ENCODE measurements at regions of chr18 and their contacts with region 1.

Region 1: GRCh38 chr18:24878289-24878688 is 417.9 kb downstream of the HRH4 start:
- DNase-seq: no peak

Region 2: DNA sequence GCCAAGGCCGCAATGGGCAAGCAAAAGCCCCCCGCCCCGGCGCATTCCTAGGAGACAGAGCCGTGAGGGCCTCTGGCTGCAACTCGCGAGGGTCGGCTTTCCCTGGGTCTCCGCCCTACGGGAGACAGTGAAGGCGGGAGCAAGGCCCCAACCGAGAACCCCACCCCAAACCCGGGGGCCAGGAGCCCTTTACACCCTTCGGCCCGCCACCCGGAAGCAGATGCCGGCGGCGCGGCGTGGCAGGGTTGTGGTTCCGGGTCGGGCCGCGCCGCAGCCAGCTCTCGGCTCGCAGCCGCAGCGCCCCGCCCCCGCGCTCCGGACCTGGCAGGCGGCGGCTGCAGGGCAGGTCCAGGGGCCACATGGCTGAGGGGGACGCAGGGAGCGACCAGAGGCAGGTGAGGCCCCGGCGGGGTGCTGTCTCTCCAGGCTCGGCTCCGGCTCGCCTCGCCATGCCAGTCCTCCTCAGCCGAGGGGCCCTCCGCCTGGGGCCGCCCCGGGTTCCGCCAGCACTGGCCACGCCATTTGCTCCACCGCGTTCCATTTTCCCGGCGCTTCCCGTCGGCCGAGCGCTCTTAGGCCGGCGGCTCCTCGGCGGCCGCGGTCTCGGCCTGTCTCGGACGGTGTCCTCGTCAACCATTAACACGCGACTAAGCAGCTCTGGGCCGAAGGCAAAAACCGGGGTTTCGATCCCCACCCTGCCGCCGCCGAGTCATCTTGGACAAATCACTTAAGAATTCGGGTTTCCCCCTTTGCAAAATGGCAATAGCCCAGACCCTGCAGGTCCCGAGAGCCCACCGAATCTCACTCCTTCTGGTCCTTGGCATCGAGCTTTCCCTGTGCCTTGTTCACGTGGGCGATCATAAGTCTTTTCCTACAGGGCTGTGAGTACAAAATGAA is 451.6 kb before region 1 on chr18 and contains the start of gene IMPACT:
- intact Hi-C with region 1: no loop called
- DNase-seq: peak; percentile 63 to 96 (median 74)

Region 3: GRCh38 chr18:25239581-25240419 is 361.5 kb after region 1 on chr18:
- intact Hi-C with region 1: loop called (anchors 5 kb)
- DNase-seq: no peak

Region 4: DNA sequence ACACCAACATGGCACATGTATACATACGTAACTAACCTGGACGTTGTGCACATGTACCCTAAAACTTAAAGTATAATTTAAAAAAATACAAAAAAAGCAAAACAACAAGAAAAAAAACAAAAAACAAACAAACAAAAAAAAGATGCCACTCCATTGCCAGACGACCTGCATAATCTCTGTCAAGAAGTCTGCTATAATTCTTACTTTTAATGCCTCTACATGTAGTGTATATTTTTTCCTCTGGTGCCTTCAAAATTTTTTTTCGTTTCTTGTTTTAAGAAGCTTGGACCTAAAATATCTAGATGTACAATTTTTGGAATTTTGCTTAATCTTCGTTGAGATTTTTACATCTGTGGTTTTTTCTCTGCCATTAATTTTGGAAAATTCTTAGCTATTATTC is 709.3 kb after region 1 on chr18:
- intact Hi-C with region 1: no loop called
- DNase-seq: no peak

Region 5: GRCh38 chr18:25830787-25831186 is 952.5 kb after region 1 on chr18:
- intact Hi-C with region 1: loop called (anchors 1 kb)
- DNase-seq: no peak

Region 6: DNA sequence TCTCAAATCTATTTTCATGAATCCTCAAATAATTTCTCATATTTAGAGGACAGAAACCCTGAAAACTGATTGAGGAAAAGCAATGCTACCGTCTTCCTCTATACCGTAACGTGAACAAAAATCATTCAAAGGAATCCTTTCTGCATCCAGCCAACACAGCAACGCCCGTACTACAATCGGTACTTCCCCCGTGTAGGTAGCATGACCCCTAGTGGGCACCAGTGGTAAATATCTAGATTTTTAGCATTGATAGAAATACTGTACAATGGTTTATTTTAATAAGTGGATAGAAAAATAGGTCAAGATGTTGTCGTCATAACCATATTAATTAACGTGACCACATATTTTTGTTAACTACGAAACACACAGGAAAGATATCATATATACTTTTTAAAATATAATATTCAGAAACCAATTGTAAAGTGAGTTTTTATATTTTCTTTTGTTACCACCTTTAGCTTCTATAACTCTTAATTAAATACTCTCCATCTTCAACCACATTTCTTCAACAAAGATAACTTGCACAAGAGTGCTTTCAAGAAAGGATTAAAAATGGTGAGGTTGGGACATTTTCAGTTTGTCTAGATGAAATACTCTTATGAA is 1018.0 kb after region 1 on chr18:
- intact Hi-C with region 1: loop called (anchors 5 kb)
- DNase-seq: peak in 1 of 10 donors; percentile 67

Measured in posterior cingulate gyrus (tissue), 11 donors.